ENCODE measurements at regions of chr7 and their contacts with region 1.

Region 1: GRCh38 chr7:77415823-77416622 is at the start of gene GSAP:
- DNase-seq: peak; percentile 69
- ATAC-seq: peak; percentile 67
- H3K4me3 Mint-ChIP-seq: peak within 1 kb of the TSS; percentile 85
- H3K27ac Mint-ChIP-seq: peak within 1 kb of the TSS; percentile 94
- H3K4me1 Mint-ChIP-seq: peaks cover 68% of the 10 kb centered on the region
- H3K27me3 Mint-ChIP-seq: no peaks in the 10 kb centered on the region
- CTCF ChIP-seq: no peak
- total RNA-seq, gene GSAP: 73.9 and 91.2 TPM in 2 replicates

Region 2: GRCh38 chr7:77331938-77332695 is 83.9 kb before region 1 on chr7:
- CTCF ChIA-PET with region 1: no interaction called
- POLR2A ChIA-PET with region 1: interaction called, 13 read pairs
- intact Hi-C with region 1: loop called (anchors 2 kb)
- DNase-seq: no peak
- ATAC-seq: peak; percentile 73
- H3K4me3 Mint-ChIP-seq: peak overlapping the region; percentile 57
- H3K27ac Mint-ChIP-seq: peak overlapping the region; percentile 38
- H3K4me1 Mint-ChIP-seq: peaks cover 57% of the 10 kb centered on the region
- H3K27me3 Mint-ChIP-seq: no peaks in the 10 kb centered on the region
- CTCF ChIP-seq: no peak

Region 3: GRCh38 chr7:77368974-77369373 is 47.0 kb before region 1 on chr7:
- CTCF ChIA-PET with region 1: interaction called, 3 read pairs
- POLR2A ChIA-PET with region 1: interaction called, 11 read pairs
- intact Hi-C with region 1: no loop called
- DNase-seq: no peak
- ATAC-seq: no peak
- H3K4me3 Mint-ChIP-seq: no peak overlapping the region
- H3K27ac Mint-ChIP-seq: no peak overlapping the region
- H3K4me1 Mint-ChIP-seq: peaks cover 2% of the 10 kb centered on the region
- H3K27me3 Mint-ChIP-seq: no peaks in the 10 kb centered on the region
- CTCF ChIP-seq: no peak

Region 4: GRCh38 chr7:77393269-77393668 is 22.8 kb before region 1 on chr7:
- CTCF ChIA-PET with region 1: interaction called, 5 read pairs
- POLR2A ChIA-PET with region 1: interaction called, 144 read pairs
- intact Hi-C with region 1: loop called (anchors 1 kb)
- DNase-seq: no peak
- ATAC-seq: peak; percentile 79
- H3K4me3 Mint-ChIP-seq: peak overlapping the region; percentile 21
- H3K27ac Mint-ChIP-seq: peak overlapping the region; percentile 85
- H3K4me1 Mint-ChIP-seq: peaks cover 48% of the 10 kb centered on the region
- H3K27me3 Mint-ChIP-seq: no peaks in the 10 kb centered on the region
- CTCF ChIP-seq: no peak

Region 5: GRCh38 chr7:77531038-77531437 is 115.0 kb after region 1 on chr7:
- CTCF ChIA-PET with region 1: no interaction called
- POLR2A ChIA-PET with region 1: interaction called, 70 read pairs
- intact Hi-C with region 1: loop called (anchors 1 kb)
- DNase-seq: no peak
- ATAC-seq: peak; percentile 89
- H3K4me3 Mint-ChIP-seq: peak overlapping the region; percentile 69
- H3K27ac Mint-ChIP-seq: peak overlapping the region; percentile 92
- H3K4me1 Mint-ChIP-seq: peaks cover 38% of the 10 kb centered on the region
- H3K27me3 Mint-ChIP-seq: no peaks in the 10 kb centered on the region
- CTCF ChIP-seq: no peak

Region 6: GRCh38 chr7:77696198-77697028 is 280.4 kb after region 1 on chr7 and contains the start of gene RSBN1L:
- CTCF ChIA-PET with region 1: no interaction called
- POLR2A ChIA-PET with region 1: interaction called, 16 read pairs
- intact Hi-C with region 1: loop called (anchors 5 kb)
- DNase-seq: peak; percentile 96
- ATAC-seq: peak; percentile 94
- H3K4me3 Mint-ChIP-seq: peak within 1 kb of the TSS; percentile 96
- H3K27ac Mint-ChIP-seq: peak within 1 kb of the TSS; percentile 93
- H3K4me1 Mint-ChIP-seq: peaks cover 54% of the 10 kb centered on the region
- H3K27me3 Mint-ChIP-seq: no peaks in the 10 kb centered on the region
- CTCF ChIP-seq: no peak
- total RNA-seq, gene RSBN1L: 24.5 and 25.9 TPM in 2 replicates

Region 7: DNA sequence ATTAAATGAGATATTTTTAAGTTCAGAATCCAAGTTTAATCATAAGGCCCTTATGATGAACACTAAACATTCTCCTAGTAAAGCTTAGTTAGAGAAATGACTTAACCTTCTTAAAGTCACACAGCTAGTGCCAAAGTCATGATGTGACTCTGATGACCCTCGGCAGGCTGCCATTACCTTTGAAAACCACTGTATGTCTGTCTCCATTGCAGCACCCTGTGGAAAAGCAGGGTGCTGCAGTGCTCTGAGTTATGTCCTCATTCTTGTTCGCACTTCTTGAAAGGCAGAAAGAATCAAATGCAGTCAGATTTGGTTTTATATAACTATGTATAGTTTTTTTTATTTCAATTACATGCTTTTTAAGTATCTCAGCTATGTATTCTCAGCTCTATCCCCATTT is 487.6 kb after region 1 on chr7:
- CTCF ChIA-PET with region 1: no interaction called
- POLR2A ChIA-PET with region 1: interaction called, 4 read pairs
- intact Hi-C with region 1: loop called (anchors 5 kb)
- DNase-seq: no peak
- ATAC-seq: peak; percentile 37
- H3K4me3 Mint-ChIP-seq: no peak overlapping the region
- H3K27ac Mint-ChIP-seq: peak overlapping the region; percentile 96
- H3K4me1 Mint-ChIP-seq: peaks cover 51% of the 10 kb centered on the region
- H3K27me3 Mint-ChIP-seq: no peaks in the 10 kb centered on the region
- CTCF ChIP-seq: no peak